IMR-90 (cell line): ENCODE measurements at regions of chr9 and their contacts with region 1.

Region 1: GRCh38 chr9:92438900-92439526 is 14.7 kb upstream of the OMD start:
- DNase-seq: peak; percentile 53
- ATAC-seq: no peak
- H3K4me3 ChIP-seq: no peak overlapping the region
- H3K27ac ChIP-seq: no peak overlapping the region
- H3K4me1 ChIP-seq: peaks cover 2% of the 10 kb centered on the region; the same call in 1 of the 2 replicates
- H3K27me3 ChIP-seq: no peaks in the 10 kb centered on the region
- CTCF ChIP-seq: peak; percentile 57
- POLR2A ChIP-seq: no peak
- RAD21 ChIP-seq: peak; percentile 66

Region 2: GRCh38 chr9:92064711-92065110 is 374.3 kb before region 1 on chr9:
- CTCF ChIA-PET with region 1: no interaction called
- POLR2A ChIA-PET with region 1: no interaction called
- dilution Hi-C with region 1: no loop called
- in situ Hi-C with region 1: no loop called
- intact Hi-C with region 1: no loop called
- DNase-seq: peak; percentile 73
- ATAC-seq: peak; percentile 79
- H3K4me3 ChIP-seq: no peak overlapping the region
- H3K27ac ChIP-seq: peak overlapping the region; percentile 51; the same call in 1 of the 2 replicates
- H3K4me1 ChIP-seq: peaks cover 12% of the 10 kb centered on the region
- H3K27me3 ChIP-seq: no peaks in the 10 kb centered on the region
- CTCF ChIP-seq: no peak
- POLR2A ChIP-seq: no peak
- RAD21 ChIP-seq: no peak

Region 3: GRCh38 chr9:92140074-92140753 is 298.8 kb before region 1 on chr9:
- CTCF ChIA-PET with region 1: interaction called, 6 read pairs
- POLR2A ChIA-PET with region 1: no interaction called
- dilution Hi-C with region 1: no loop called
- in situ Hi-C with region 1: loop called (anchors 10 kb)
- intact Hi-C with region 1: loop called (anchors 2 kb)
- DNase-seq: peak; percentile 65
- ATAC-seq: peak; percentile 55
- H3K4me3 ChIP-seq: peak overlapping the region; percentile 65
- H3K27ac ChIP-seq: peak overlapping the region; percentile 92
- H3K4me1 ChIP-seq: peaks cover 35% of the 10 kb centered on the region
- H3K27me3 ChIP-seq: no peaks in the 10 kb centered on the region
- CTCF ChIP-seq: peak; percentile 92
- POLR2A ChIP-seq: no peak
- RAD21 ChIP-seq: peak; percentile 86

Region 4: GRCh38 chr9:92332577-92333281 is 106.3 kb before region 1 on chr9:
- CTCF ChIA-PET with region 1: interaction called, 3 read pairs
- POLR2A ChIA-PET with region 1: no interaction called
- dilution Hi-C with region 1: no loop called
- in situ Hi-C with region 1: loop called (anchors 5 kb)
- intact Hi-C with region 1: loop called (anchors 1 kb)
- DNase-seq: peak; percentile 43
- ATAC-seq: no peak
- H3K4me3 ChIP-seq: no peak overlapping the region
- H3K27ac ChIP-seq: no peak overlapping the region; the same call in 1 of the 2 replicates
- H3K4me1 ChIP-seq: no peaks in the 10 kb centered on the region; the same call in 1 of the 2 replicates
- H3K27me3 ChIP-seq: no peaks in the 10 kb centered on the region
- CTCF ChIP-seq: no peak
- POLR2A ChIP-seq: no peak
- RAD21 ChIP-seq: no peak

Region 5: DNA sequence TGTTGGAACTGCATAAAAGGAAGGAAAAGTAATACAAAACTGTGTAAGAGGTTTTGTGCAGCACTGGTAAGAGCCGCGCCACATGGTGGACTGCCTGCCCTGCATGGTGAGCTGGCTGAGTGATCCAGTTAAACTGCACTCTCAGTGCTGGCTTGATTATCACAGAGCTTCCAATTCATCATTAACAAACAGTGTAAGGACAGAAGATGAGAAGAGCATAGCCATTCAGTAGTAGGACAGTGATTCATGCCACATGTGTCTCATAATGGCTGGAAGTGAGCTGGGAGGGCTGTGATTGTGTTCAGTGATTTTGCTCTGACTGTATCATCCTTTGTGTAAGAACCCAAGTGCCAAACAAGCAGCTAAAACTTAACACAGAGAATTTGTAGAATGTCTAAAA is 29.2 kb after region 1 on chr9:
- CTCF ChIA-PET with region 1: no interaction called
- POLR2A ChIA-PET with region 1: interaction called, 11 read pairs
- dilution Hi-C with region 1: no loop called
- in situ Hi-C with region 1: no loop called
- intact Hi-C with region 1: no loop called
- DNase-seq: peak; percentile 66
- ATAC-seq: peak; percentile 33
- H3K4me3 ChIP-seq: no peak overlapping the region
- H3K27ac ChIP-seq: no peak overlapping the region
- H3K4me1 ChIP-seq: peaks cover 3% of the 10 kb centered on the region
- H3K27me3 ChIP-seq: no peaks in the 10 kb centered on the region
- CTCF ChIP-seq: no peak
- POLR2A ChIP-seq: no peak
- RAD21 ChIP-seq: no peak